Endothelial cell of umbilical vein (primary cell): ENCODE measurements at regions of chr1 and their contacts with region 1.

Region 1: GRCh38 chr1:247131236-247131635 is 27.1 kb upstream of the ZNF669 start:
- DNase-seq: no peak
- H3K4me3 ChIP-seq: no peak overlapping the region
- H3K27ac ChIP-seq: no peak overlapping the region
- H3K4me1 ChIP-seq: no peaks in the 10 kb centered on the region
- H3K27me3 ChIP-seq: no peaks in the 10 kb centered on the region
- CTCF ChIP-seq: no peak
- POLR2A ChIP-seq: no peak

Region 2: DNA sequence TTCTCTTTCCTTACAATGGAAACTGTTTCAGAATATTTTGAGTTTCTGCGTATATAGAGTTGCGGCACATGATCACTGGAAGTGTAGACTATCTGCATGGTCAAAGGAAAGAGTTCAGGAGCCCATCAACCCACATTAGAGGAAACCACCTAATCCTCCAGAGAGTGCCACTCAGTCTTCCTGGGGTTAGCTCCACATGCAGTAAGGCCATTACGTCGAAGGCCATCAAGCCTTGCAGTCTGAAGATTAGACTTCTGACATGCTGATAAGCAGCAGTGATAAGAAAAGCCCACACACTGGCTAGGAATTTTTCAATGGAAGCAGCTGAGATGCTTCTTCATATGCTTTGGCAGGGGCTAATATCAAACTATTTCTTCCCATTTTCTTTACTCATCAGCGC is 34.7 kb before region 1 on chr1:
- CTCF ChIA-PET with region 1: no interaction called
- POLR2A ChIA-PET with region 1: no interaction called
- dilution Hi-C with region 1: no loop called
- intact Hi-C with region 1: no loop called
- DNase-seq: no peak
- H3K4me3 ChIP-seq: no peak overlapping the region
- H3K27ac ChIP-seq: no peak overlapping the region
- H3K4me1 ChIP-seq: no peaks in the 10 kb centered on the region
- H3K27me3 ChIP-seq: no peaks in the 10 kb centered on the region
- CTCF ChIP-seq: no peak
- POLR2A ChIP-seq: no peak

Region 3: DNA sequence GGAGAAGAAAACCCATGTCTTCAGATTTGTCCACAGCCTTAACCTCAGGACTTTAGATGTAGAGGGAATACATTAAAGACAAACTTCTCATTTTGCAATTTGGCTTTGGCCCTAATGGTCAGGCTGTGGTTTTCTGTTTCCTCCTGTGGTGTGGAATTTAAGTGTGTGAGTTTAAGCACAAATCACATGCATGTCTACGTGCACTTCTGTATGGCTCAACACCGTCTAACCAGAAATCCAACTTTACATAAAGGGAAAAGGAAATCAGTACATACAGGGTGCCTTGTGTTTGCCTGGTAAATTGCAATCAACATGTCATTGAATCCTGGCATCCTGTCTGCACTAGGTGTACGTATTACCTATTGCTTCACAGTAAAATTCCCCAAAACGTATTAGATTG is 41.8 kb after region 1 on chr1:
- CTCF ChIA-PET with region 1: no interaction called
- POLR2A ChIA-PET with region 1: no interaction called
- dilution Hi-C with region 1: no loop called
- intact Hi-C with region 1: loop called (anchors 2 kb)
- DNase-seq: no peak
- H3K4me3 ChIP-seq: no peak overlapping the region
- H3K27ac ChIP-seq: no peak overlapping the region
- H3K4me1 ChIP-seq: no peaks in the 10 kb centered on the region
- H3K27me3 ChIP-seq: no peaks in the 10 kb centered on the region
- CTCF ChIP-seq: no peak
- POLR2A ChIP-seq: no peak

Region 4: GRCh38 chr1:247415423-247416361 is 284.5 kb after region 1 on chr1 and contains the start of gene NLRP3:
- CTCF ChIA-PET with region 1: no interaction called
- POLR2A ChIA-PET with region 1: no interaction called
- dilution Hi-C with region 1: no loop called
- intact Hi-C with region 1: no loop called
- DNase-seq: peak; percentile 12
- H3K4me3 ChIP-seq: no peak within 1 kb of the TSS
- H3K27ac ChIP-seq: no peak within 1 kb of the TSS
- H3K4me1 ChIP-seq: no peaks in the 10 kb centered on the region
- H3K27me3 ChIP-seq: no peaks in the 10 kb centered on the region
- CTCF ChIP-seq: no peak
- POLR2A ChIP-seq: no peak
- total RNA-seq, gene NLRP3: 0.07 and 0.24 TPM in 2 replicates